Caco-2 (cell line): ENCODE measurements at regions of chr1 and their contacts with region 1.

Region 1: DNA sequence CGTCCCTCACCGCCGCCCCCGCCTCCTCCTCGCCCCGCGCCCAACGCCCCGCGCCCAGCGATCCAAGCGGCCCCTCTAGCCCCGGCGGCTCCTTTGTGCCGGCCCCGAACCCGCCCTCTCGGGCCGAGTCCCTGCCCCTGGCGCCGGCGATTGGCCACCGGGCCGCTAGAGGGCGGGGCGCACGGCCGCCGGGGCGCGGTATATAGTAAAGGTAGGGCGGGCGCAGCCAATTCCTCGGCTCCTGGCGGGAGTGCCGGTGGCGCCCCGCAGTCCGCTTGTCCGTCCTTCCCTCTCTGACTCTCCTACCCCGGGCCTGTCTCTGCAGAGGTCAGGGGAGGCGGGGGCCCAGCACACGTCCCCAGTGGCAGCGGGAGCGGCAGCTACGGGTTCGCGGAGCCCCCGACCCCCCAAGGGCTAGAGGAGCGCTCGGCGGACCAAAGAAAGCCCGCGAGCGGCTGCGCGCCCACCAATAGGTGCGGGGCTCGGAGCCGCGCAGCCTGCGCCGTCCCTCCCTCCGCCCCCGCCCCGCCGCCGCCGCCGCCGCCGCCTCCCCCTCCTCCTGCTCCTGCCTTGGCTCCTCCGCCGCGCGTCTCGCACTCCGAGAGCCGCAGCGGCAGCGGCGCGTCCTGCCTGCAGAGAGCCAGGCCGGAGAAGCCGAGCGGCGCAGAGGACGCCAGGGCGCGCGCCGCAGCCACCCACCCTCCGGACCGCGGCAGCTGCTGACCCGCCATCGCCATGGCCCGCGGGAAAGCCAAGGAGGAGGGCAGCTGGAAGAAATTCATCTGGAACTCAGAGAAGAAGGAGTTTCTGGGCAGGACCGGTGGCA is at the start of gene ATP1B1:
- DNase-seq: peak; percentile 93 to 98
- H3K4me3 ChIP-seq: peak within 1 kb of the TSS; percentile 99
- H3K4me3 Mint-ChIP-seq: peak within 1 kb of the TSS; percentile 99
- H3K27ac Mint-ChIP-seq: peak within 1 kb of the TSS; percentile 97
- H3K4me1 ChIP-seq: peaks cover 56% of the 10 kb centered on the region
- H3K4me1 Mint-ChIP-seq: peaks cover 24% of the 10 kb centered on the region
- H3K27me3 ChIP-seq: no peaks in the 10 kb centered on the region
- H3K27me3 Mint-ChIP-seq: no peaks in the 10 kb centered on the region
- CTCF ChIP-seq: peak in 1 of 2 experiments; percentile 19
- total RNA-seq, gene ATP1B1: 320 and 326 TPM in 2 replicates

Region 2: DNA sequence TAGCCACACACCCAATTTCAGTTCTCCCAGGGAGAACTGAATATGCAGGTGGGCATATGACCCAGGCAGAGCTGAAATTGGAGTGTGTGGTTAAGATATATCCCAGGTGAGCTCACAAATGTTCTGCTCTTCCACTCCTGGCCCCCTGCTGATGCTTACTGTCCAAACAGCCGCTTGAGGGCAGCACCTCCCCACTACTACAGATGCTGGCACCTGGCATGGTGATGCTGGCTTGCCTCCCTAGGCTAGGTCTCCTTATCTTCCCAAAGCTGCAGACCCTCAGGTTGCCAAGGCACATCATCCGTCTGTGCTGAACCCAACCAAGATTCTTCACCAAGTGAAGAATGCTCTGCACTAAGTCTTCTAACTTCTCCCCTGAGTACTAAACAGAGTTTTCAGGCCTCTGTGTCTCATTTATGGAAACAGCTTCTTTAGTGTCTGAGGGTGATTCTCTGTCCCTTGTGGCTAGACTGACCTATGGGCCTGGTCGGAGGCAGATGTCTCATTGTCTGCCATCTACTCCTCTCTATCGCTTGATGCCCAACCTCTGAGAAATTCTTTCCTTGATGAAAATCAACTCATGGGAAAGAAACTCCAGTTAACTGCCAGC is 502.7 kb before region 1 on chr1:
- CTCF ChIA-PET with region 1: interaction called, 7 read pairs
- POLR2A ChIA-PET with region 1: interaction called, 10 read pairs
- intact Hi-C with region 1: loop called (anchors 1 kb)
- DNase-seq: peak; percentile 79 to 81
- H3K4me3 ChIP-seq: no peak overlapping the region
- H3K4me3 Mint-ChIP-seq: no peak overlapping the region
- H3K27ac Mint-ChIP-seq: no peak overlapping the region
- H3K4me1 ChIP-seq: peaks cover 4% of the 10 kb centered on the region; the same call in 1 of the 2 replicates
- H3K4me1 Mint-ChIP-seq: peaks cover 11% of the 10 kb centered on the region
- H3K27me3 ChIP-seq: no peaks in the 10 kb centered on the region
- H3K27me3 Mint-ChIP-seq: no peaks in the 10 kb centered on the region
- CTCF ChIP-seq: peak; percentile 87 to 89

Region 3: DNA sequence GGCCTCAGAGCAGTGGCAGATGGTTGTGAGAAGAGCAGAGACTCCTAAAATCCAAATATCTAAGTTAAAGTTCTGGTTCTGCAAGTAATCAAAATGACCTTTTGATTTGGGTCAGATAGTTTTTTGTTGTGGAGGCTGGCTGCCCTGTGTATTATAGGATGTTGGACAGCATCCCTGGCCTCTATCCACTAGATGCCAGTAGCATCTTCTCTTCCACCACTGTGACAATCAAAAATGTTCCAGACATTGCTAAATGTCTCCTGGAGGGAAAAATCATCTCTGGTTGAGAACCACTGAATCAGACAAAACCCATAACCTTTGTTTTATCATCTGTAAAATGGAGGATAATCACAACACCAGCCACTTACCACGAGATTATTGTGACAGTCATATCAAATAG is 371.4 kb before region 1 on chr1:
- CTCF ChIA-PET with region 1: no interaction called
- POLR2A ChIA-PET with region 1: interaction called, 3 read pairs
- intact Hi-C with region 1: loop called (anchors 1 kb)
- DNase-seq: peak in 1 of 2 experiments; percentile 13
- H3K4me3 ChIP-seq: no peak overlapping the region
- H3K4me3 Mint-ChIP-seq: no peak overlapping the region
- H3K27ac Mint-ChIP-seq: peak overlapping the region; percentile 21
- H3K4me1 ChIP-seq: no peaks in the 10 kb centered on the region
- H3K4me1 Mint-ChIP-seq: peaks cover 9% of the 10 kb centered on the region
- H3K27me3 ChIP-seq: no peaks in the 10 kb centered on the region
- H3K27me3 Mint-ChIP-seq: no peaks in the 10 kb centered on the region
- CTCF ChIP-seq: peak; percentile 21 to 34

Region 4: GRCh38 chr1:168803806-168804510 is 302.4 kb before region 1 on chr1:
- CTCF ChIA-PET with region 1: interaction called, 3 read pairs
- POLR2A ChIA-PET with region 1: no interaction called
- intact Hi-C with region 1: loop called (anchors 2 kb)
- DNase-seq: no peak
- H3K4me3 ChIP-seq: no peak overlapping the region
- H3K4me3 Mint-ChIP-seq: peak overlapping the region; percentile 8
- H3K27ac Mint-ChIP-seq: peak overlapping the region; percentile 25
- H3K4me1 ChIP-seq: peaks cover 70% of the 10 kb centered on the region
- H3K4me1 Mint-ChIP-seq: peaks cover 47% of the 10 kb centered on the region
- H3K27me3 ChIP-seq: no peaks in the 10 kb centered on the region
- H3K27me3 Mint-ChIP-seq: no peaks in the 10 kb centered on the region
- CTCF ChIP-seq: no peak

Region 5: DNA sequence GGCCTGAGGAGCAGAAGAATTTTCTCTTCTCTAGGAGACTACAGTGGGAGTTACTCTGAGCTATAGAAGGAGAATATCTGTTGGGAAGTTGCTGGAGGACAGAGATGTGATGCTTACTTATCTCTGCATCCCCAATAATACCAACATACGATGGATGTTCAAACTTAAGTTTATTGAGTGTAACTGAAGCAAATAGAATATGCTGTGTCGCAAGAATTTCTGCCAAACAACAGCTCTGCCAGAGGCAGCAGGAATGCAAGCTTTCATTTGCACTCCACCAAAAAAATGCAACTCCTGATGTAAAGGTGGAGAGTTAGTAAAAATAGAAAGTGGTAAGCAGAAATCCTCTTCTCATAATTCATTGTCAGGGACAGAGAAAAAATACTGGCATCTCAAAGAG is 231.2 kb before region 1 on chr1:
- CTCF ChIA-PET with region 1: no interaction called
- POLR2A ChIA-PET with region 1: no interaction called
- intact Hi-C with region 1: loop called (anchors 1 kb)
- DNase-seq: peak; percentile 39 to 42
- H3K4me3 ChIP-seq: no peak overlapping the region
- H3K4me3 Mint-ChIP-seq: no peak overlapping the region
- H3K27ac Mint-ChIP-seq: peak overlapping the region; percentile 80
- H3K4me1 ChIP-seq: peaks cover 31% of the 10 kb centered on the region
- H3K4me1 Mint-ChIP-seq: peaks cover 50% of the 10 kb centered on the region
- H3K27me3 ChIP-seq: no peaks in the 10 kb centered on the region
- H3K27me3 Mint-ChIP-seq: no peaks in the 10 kb centered on the region
- CTCF ChIP-seq: no peak

Region 6: GRCh38 chr1:168960595-168960994 is 145.7 kb before region 1 on chr1:
- CTCF ChIA-PET with region 1: no interaction called
- POLR2A ChIA-PET with region 1: no interaction called
- intact Hi-C with region 1: loop called (anchors 2 kb)
- DNase-seq: peak in 1 of 2 experiments; percentile 7
- H3K4me3 ChIP-seq: no peak overlapping the region
- H3K4me3 Mint-ChIP-seq: no peak overlapping the region
- H3K27ac Mint-ChIP-seq: peak overlapping the region; percentile 52
- H3K4me1 ChIP-seq: peaks cover 18% of the 10 kb centered on the region
- H3K4me1 Mint-ChIP-seq: peaks cover 20% of the 10 kb centered on the region
- H3K27me3 ChIP-seq: no peaks in the 10 kb centered on the region
- H3K27me3 Mint-ChIP-seq: no peaks in the 10 kb centered on the region
- CTCF ChIP-seq: no peak